ENCODE measurements at regions of chr17 and their contacts with region 1.

Region 1: GRCh38 chr17:78689029-78689428 is 93.0 kb downstream of the CYTH1 start:
- DNase-seq: no peak
- H3K4me3 ChIP-seq: no peak overlapping the region
- H3K27ac ChIP-seq: no peak overlapping the region
- H3K4me1 ChIP-seq: no peaks in the 10 kb centered on the region
- H3K27me3 ChIP-seq: no peaks in the 10 kb centered on the region
- CTCF ChIP-seq: no peak
- EP300 ChIP-seq: no peak
- POLR2A ChIP-seq: no peak

Region 2: GRCh38 chr17:78621720-78622490 is 67.1 kb before region 1 on chr17:
- in situ Hi-C with region 1: no loop called
- intact Hi-C with region 1: loop called (anchors 2 kb)
- DNase-seq: no peak
- H3K4me3 ChIP-seq: no peak overlapping the region
- H3K27ac ChIP-seq: no peak overlapping the region
- H3K4me1 ChIP-seq: peaks cover 0 to 8% (median 0%) of the 10 kb centered on the region in 4 donors
- H3K27me3 ChIP-seq: peaks cover 4% of the 10 kb centered on the region
- CTCF ChIP-seq: no peak
- EP300 ChIP-seq: no peak
- POLR2A ChIP-seq: no peak